Adrenal gland (tissue), 19 donors: ENCODE measurements at regions of chr6 and their contacts with region 1.

Region 1: GRCh38 chr6:34196126-34196830 is 40.4 kb upstream of the HMGA1 start:
- DNase-seq: peak; percentile 76 to 93 (median 87)
- H3K4me3 ChIP-seq: peak overlapping the region in 3 of 4 donors; percentile 38 to 54 (median 48)
- H3K27ac ChIP-seq: no peak overlapping the region
- H3K4me1 ChIP-seq: no peaks in the 10 kb centered on the region
- H3K27me3 ChIP-seq: no peaks in the 10 kb centered on the region
- CTCF ChIP-seq: peak; percentile 82 to 98 (median 93)
- POLR2A ChIP-seq: no peak

Region 2: GRCh38 chr6:34232901-34233300 is 36.6 kb after region 1 on chr6:
- intact Hi-C with region 1: loop called in 1 of 2 experiments (anchors 5 kb)
- DNase-seq: no peak
- H3K4me3 ChIP-seq: no peak overlapping the region
- H3K27ac ChIP-seq: no peak overlapping the region
- H3K4me1 ChIP-seq: peaks cover 3 to 14% of the 10 kb centered on the region in 2 donors
- H3K27me3 ChIP-seq: no peaks in the 10 kb centered on the region
- CTCF ChIP-seq: no peak
- POLR2A ChIP-seq: no peak

Region 3: DNA sequence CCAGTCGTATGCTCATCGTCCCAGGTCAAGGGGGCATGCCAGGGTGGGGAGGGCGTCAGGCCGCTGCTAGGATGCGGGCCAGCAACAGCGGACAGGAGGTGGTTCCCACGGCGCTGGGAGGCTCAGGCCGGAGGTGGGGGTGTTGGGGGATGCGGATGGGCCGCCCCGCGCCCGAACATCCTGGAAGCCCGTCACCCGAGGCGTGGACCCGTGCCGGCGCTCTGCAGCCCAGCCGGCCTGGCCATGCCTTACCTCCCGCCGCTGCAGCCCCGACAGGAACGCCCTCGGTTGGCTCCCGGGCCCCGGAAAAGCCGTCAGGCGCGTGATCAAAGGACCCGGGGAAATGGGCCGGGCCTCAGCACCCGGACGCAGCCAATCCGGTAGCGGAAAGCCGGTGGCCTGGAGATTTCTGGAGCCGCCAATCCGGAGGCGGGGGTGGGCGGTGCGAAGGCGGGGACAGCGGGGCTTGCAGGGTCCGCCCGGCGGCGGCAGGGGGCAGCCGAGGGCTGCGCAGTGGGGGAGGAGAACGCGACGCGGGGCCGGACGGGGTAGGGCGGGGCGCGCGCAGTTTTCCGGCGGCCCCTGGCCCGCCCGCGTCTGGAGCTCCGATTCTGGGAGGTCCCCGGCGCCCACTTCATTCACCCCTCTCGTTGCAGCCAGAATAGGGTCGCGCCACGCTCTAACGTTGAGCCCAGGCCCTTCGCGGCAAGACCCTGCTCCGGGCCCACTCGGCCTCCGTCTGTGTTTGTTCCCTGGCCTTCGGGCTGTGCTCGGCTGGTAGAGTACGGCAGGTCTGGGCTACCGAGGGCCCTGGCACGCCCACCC is 52.7 kb after region 1 on chr6 and contains the start of gene SMIM29:
- intact Hi-C with region 1: loop called in 1 of 2 experiments (anchors 5 kb)
- DNase-seq: peak; percentile 97 to 98 (median 97)
- H3K4me3 ChIP-seq: peak within 1 kb of the TSS; percentile 22 to 83 (median 68)
- H3K27ac ChIP-seq: peak within 1 kb of the TSS; percentile 28 to 90 (median 83)
- H3K4me1 ChIP-seq: peaks cover 16 to 23% of the 10 kb centered on the region in 2 donors
- H3K27me3 ChIP-seq: no peaks in the 10 kb centered on the region
- CTCF ChIP-seq: peak; percentile 71 to 98 (median 90)
- POLR2A ChIP-seq: peak; percentile 60 to 87
- total RNA-seq, gene SMIM29: 21.4 to 53.7 (median 31.2) TPM

Region 4: GRCh38 chr6:34414999-34415858 is 219.0 kb after region 1 on chr6:
- intact Hi-C with region 1: loop called in 1 of 2 experiments (anchors 5 kb)
- DNase-seq: peak; percentile 65 to 91 (median 77)
- H3K4me3 ChIP-seq: peak overlapping the region in 1 of 4 donors; percentile 17
- H3K27ac ChIP-seq: peak overlapping the region; percentile 67 to 88 (median 77)
- H3K4me1 ChIP-seq: peaks cover 8 to 17% of the 10 kb centered on the region in 2 donors
- H3K27me3 ChIP-seq: no peaks in the 10 kb centered on the region
- CTCF ChIP-seq: peak; percentile 40 to 96 (median 86)
- POLR2A ChIP-seq: no peak

Region 5: DNA sequence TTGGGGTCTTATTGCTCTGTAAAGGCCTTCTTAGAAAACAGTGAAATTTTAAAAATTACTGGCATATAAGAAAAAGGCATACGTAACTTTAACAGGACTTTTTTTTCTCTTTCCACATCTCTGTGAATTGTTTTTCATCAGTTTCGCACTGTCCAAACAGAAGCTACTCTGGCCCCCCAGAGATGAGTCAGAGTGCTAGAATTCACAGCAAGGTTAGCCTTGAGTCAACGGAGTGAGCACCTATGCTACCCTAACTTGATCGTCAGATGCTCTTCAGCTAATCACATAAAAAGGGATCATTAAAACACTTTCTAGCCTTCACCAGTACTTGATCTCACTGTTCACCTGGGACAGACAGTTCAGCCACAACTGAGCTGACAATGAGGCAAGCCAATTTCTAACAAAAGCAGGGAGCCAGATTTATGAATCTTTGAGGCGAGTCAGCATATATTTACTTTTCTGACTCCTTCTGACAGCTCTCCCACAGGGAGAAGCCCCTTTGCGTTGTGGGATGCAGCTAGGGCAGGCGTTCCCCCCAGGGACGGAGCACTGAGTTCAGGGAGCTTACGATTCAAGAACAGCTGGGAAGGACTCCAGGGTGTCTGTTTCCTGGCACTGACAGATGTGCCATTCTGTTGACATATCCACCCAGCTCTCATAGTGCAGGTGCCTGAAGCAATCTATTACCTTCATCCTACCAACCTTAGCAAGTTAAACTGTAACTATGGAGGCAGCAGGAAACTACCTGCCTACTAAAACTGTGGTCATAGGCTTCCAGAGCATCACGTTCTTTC is 406.2 kb after region 1 on chr6:
- intact Hi-C with region 1: loop called in 1 of 2 experiments (anchors 10 kb)
- DNase-seq: no peak
- H3K4me3 ChIP-seq: no peak overlapping the region
- H3K27ac ChIP-seq: no peak overlapping the region
- H3K4me1 ChIP-seq: peaks cover 3 to 35% of the 10 kb centered on the region in 2 donors
- H3K27me3 ChIP-seq: no peaks in the 10 kb centered on the region
- CTCF ChIP-seq: no peak
- POLR2A ChIP-seq: no peak